ENCODE measurements at regions of chr22 and their contacts with region 1.

Region 1: GRCh38 chr22:39917776-39918495 is 17.1 kb downstream of the GRAP2 start:
- DNase-seq: peak in 2 of 10 donors; percentile 51 to 61
- ATAC-seq: peak; percentile 12 to 13
- H3K4me3 Mint-ChIP-seq: peak overlapping the region; percentile 61 to 99 (median 84)
- H3K27ac Mint-ChIP-seq: peak overlapping the region in 8 of 10 donors; percentile 95 to 99 (median 96)
- H3K4me1 Mint-ChIP-seq: peaks cover 54 to 94% (median 90%) of the 10 kb centered on the region in 4 donors
- H3K27me3 Mint-ChIP-seq: no peaks in the 10 kb centered on the region

Region 2: GRCh38 chr22:39932918-39933649 is 15.1 kb after region 1 on chr22:
- POLR2A ChIA-PET with region 1: interaction called, 408 read pairs
- DNase-seq: peak; percentile 29 to 81 (median 64)
- ATAC-seq: peak; percentile 15 to 59
- H3K4me3 Mint-ChIP-seq: peak overlapping the region in 9 of 10 donors; percentile 68 to 94 (median 88)
- H3K27ac Mint-ChIP-seq: peak overlapping the region in 6 of 10 donors; percentile 95 to 99 (median 98)
- H3K4me1 Mint-ChIP-seq: peaks cover 43 to 67% (median 56%) of the 10 kb centered on the region in 4 donors
- H3K27me3 Mint-ChIP-seq: no peaks in the 10 kb centered on the region

Region 3: DNA sequence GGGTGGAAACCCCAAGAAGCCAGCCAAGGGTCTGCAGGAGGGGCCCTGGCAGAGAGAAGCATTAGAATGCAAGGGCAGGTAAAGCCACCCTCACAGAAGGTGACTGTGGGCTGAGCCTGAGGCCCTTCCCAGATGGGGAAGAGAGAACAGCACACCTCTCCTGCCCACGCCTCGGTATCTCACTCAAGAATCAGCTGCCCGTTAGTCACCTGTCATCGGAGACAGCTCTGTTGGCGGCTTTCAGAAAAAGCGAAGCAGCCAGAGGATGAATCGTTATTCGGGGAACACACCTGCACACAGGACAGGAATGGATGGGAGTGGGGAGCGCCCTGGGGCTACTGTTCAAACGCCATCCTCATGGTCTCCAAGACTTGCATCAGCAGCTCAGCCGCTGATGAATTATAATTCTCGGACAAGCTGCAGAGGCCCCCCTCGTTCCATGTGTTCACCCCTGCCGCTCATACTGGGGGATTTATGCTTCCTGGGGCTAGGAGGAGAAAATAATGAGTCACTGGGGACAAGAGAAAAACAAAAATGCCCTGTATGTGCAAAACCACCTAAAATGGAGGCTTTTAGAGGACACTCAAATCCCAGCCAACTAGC is 20.7 kb after region 1 on chr22:
- POLR2A ChIA-PET with region 1: interaction called, 116 read pairs
- DNase-seq: peak in 3 of 10 donors; percentile 24 to 48 (median 41)
- ATAC-seq: peak; percentile 5 to 15
- H3K4me3 Mint-ChIP-seq: peak overlapping the region in 9 of 10 donors; percentile 68 to 94 (median 88)
- H3K27ac Mint-ChIP-seq: peak overlapping the region in 6 of 10 donors; percentile 95 to 99 (median 98)
- H3K4me1 Mint-ChIP-seq: peaks cover 47 to 97% (median 94%) of the 10 kb centered on the region in 4 donors
- H3K27me3 Mint-ChIP-seq: no peaks in the 10 kb centered on the region

Region 4: DNA sequence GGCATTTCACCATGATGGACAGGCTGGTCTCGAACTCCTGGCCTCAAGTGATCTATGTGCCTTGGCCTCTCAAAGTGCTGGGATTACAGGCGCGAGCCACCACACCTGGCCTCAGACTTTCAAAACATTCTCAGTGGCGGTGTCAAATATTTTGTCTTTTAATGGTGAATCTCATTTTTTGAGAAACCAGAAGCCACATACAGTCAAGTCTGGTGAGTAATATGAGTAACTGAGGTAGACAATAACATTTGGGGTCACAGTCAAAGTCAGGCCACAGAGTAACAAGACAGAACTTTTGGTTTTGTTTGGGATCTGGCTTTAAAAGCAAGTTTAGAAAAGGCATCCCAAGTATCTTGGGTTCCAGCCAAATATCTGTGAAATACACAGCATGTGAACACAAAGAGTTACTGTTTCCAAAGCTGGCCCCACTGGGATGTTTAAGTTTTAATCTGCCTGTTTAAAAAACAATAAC is 36.7 kb after region 1 on chr22:
- POLR2A ChIA-PET with region 1: interaction called, 12 read pairs
- DNase-seq: no peak
- ATAC-seq: peak in 1 of 2 donors; percentile 10
- H3K4me3 Mint-ChIP-seq: peak overlapping the region in 5 of 10 donors; percentile 4 to 72 (median 29)
- H3K27ac Mint-ChIP-seq: peak overlapping the region in 6 of 10 donors; percentile 84 to 99 (median 97)
- H3K4me1 Mint-ChIP-seq: peaks cover 61 to 99% (median 93%) of the 10 kb centered on the region in 4 donors
- H3K27me3 Mint-ChIP-seq: no peaks in the 10 kb centered on the region

Region 5: GRCh38 chr22:40121461-40121860 is 203.5 kb after region 1 on chr22:
- POLR2A ChIA-PET with region 1: no interaction called
- DNase-seq: peak in 9 of 10 donors; percentile 13 to 73 (median 53)
- ATAC-seq: peak; percentile 24 to 62
- H3K4me3 Mint-ChIP-seq: peak overlapping the region in 5 of 10 donors; percentile 10 to 57 (median 42)
- H3K27ac Mint-ChIP-seq: peak overlapping the region; percentile 51 to 98 (median 92)
- H3K4me1 Mint-ChIP-seq: peaks cover 44 to 76% (median 63%) of the 10 kb centered on the region in 4 donors
- H3K27me3 Mint-ChIP-seq: no peaks in the 10 kb centered on the region